Posterior cingulate gyrus (tissue), 11 donors: ENCODE measurements at regions of chr6 and their contacts with region 1.

Region 1: DNA sequence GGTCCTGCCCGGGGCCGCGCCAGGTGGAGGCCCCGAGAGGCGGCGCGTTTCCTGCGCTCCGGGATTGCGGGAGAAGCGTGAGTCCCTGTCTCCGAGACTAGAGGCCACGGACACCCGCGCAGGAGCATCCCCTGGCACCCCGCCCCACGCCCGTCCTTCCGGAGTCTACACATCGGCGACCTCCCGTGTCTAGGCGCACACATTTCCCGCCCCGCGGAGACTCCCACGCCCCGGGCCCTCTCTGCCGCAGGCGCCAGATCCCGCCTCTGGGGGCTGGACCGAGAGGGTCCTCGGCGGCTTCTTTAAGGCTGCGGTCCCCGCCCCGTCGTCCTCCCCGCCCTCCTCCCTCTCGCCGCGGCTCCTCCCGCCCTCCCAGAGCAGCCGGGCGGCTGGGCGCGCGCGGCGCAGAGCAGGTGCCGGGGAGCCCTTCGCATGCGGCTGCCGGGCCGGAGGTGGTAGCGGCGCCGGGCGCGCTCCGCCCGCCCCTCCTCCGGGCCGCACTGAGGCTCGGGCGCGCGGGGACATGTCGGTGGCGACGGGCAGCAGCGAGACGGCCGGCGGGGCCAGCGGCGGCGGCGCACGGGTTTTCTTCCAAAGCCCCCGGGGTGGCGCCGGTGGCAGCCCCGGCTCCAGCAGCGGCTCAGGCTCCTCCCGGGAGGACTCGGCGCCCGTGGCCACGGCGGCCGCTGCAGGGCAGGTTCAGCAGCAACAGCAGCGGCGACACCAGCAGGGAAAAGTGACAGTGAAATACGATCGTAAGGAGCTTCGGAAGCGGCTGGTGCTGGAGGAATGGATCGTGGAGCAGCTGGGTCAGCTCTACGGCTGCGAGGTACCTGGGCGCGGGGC is at the start of gene PPP1R14C:
- DNase-seq: peak; percentile 26 to 95 (median 66)

Region 2: GRCh38 chr6:149823013-149823412 is 319.9 kb before region 1 on chr6:
- intact Hi-C with region 1: no loop called
- DNase-seq: no peak

Region 3: GRCh38 chr6:150004101-150004782 is 138.7 kb before region 1 on chr6:
- intact Hi-C with region 1: no loop called
- DNase-seq: no peak

Region 4: GRCh38 chr6:150395398-150396009 is 252.6 kb after region 1 on chr6:
- intact Hi-C with region 1: loop called (anchors 5 kb)
- DNase-seq: peak in 9 of 10 donors; percentile 13 to 91 (median 50)